ENCODE measurements at regions of chr12 and their contacts with region 1.

Region 1: DNA sequence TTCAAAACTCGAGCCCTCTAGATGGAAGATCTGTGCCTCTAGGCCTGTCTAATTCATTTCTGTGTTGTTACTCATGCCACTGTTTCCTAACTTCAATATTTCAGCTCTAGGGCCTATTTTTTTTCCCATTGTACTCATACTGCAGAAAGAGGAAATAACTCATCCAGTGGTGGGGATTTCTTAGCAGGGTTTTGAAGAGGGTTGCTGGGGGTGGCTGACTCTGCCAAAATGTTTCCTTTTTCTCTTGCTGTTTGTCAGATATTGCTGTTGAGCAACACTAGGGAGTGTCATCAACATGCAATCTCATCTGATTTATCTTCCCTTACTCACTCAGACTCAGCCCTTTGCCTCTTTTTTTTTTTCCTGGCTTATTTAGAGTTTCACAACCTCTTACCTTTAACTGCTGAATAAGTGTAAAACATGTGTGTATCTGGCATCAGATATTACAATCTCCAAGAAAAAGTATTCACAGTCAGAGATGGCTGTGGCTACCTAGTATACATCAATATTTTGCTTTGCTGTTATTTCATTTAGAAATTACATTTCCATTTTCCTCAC is 189.5 kb downstream of the DUSP6 start:
- H3K4me3 Mint-ChIP-seq: no peak overlapping the region
- H3K27ac Mint-ChIP-seq: no peak overlapping the region
- H3K4me1 Mint-ChIP-seq: peaks cover 15% of the 10 kb centered on the region
- H3K27me3 Mint-ChIP-seq: no peaks in the 10 kb centered on the region

Region 2: DNA sequence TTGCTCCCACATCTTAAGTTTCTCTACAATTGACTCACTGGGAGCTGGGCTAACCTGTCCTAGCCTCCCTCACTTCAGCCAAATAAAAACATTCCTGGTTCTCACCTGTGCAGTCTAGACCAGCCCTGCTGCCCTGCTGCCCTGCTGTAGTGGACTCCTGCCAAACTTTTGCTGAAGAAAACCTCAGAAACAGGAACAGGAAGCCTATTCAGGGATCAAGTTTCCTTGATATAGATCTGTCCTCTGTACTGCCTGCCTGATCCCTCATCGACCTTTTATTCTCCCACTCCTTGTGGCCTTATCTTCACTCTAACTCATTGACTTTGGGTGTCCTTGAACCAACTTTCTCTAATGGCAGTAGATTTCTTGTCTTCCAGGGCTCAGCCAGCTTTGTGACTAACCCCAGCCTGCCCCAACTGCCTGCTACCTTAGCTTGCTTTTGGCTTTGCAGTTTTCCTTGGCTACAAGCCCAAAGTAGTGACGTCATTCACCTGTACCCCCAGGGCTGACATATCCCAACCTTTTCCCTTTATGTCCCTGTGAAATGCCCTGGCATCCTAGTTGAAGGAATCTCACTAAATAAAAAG is 45.2 kb before region 1 on chr12:
- intact Hi-C with region 1: no loop called
- H3K4me3 Mint-ChIP-seq: no peak overlapping the region
- H3K27ac Mint-ChIP-seq: no peak overlapping the region
- H3K4me1 Mint-ChIP-seq: peaks cover 21% of the 10 kb centered on the region
- H3K27me3 Mint-ChIP-seq: no peaks in the 10 kb centered on the region

Region 3: GRCh38 chr12:89345830-89346740 is 183.3 kb after region 1 on chr12:
- intact Hi-C with region 1: loop called (anchors 2 kb)
- H3K4me3 Mint-ChIP-seq: peak overlapping the region; percentile 68
- H3K27ac Mint-ChIP-seq: peak overlapping the region; percentile 93
- H3K4me1 Mint-ChIP-seq: peaks cover 70% of the 10 kb centered on the region
- H3K27me3 Mint-ChIP-seq: peaks cover 4% of the 10 kb centered on the region

Region 4: DNA sequence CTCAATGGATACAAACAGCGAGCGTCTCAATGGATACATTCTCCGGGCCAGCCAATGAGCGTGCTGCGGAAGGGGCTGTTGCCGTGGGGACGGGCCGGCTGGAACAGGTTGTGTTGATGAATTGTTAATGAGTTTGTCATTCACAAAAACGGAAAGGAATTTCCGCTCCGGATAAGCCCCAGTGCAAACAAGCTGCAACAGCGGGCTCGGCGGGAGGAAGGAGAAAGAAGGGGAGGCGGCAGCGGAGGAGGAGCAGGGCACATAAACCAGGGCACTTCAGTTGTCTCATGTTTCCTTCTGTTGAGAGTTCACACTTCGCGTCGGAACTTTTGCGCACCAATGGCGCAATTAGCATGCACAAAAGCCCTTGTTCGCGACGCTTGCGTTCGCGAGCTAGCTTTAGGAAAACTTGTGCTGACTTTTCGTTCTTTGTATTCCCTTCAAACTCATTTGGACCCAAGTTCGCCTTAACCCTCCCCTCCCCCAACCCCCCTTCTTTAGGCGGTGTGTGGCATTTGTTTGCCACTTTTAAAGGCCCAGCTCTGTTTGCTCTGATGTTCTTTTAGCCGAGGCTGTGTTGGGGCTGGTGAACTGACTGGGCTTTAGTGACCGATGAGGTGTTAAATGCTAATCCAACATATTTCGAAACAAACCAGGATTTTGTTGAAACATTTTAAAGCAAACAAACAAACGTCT is 189.9 kb after region 1 on chr12 and contains the start of gene DUSP6:
- intact Hi-C with region 1: loop called (anchors 2 kb)
- H3K4me3 Mint-ChIP-seq: peak within 1 kb of the TSS; percentile 92
- H3K27ac Mint-ChIP-seq: peak within 1 kb of the TSS; percentile 91
- H3K4me1 Mint-ChIP-seq: peaks cover 55% of the 10 kb centered on the region
- H3K27me3 Mint-ChIP-seq: no peaks in the 10 kb centered on the region